ENCODE measurements at regions of chr5 and their contacts with region 1.

Region 1: GRCh38 chr5:119309326-119309725 is 46.5 kb upstream of the TNFAIP8 start:
- DNase-seq: no peak
- ATAC-seq: peak; percentile 20 to 55
- H3K4me3 Mint-ChIP-seq: peak overlapping the region; percentile 71 to 93 (median 84)
- H3K27ac Mint-ChIP-seq: peak overlapping the region; percentile 95 to 100 (median 98)
- H3K4me1 Mint-ChIP-seq: peaks cover 37 to 95% (median 89%) of the 10 kb centered on the region in 4 donors
- H3K27me3 Mint-ChIP-seq: no peaks in the 10 kb centered on the region

Region 2: GRCh38 chr5:119328753-119329602 is 19.7 kb after region 1 on chr5:
- POLR2A ChIA-PET with region 1: interaction called, 18 read pairs
- DNase-seq: peak in 8 of 10 donors; percentile 28 to 65 (median 45)
- ATAC-seq: peak; percentile 57 to 63
- H3K4me3 Mint-ChIP-seq: peak overlapping the region; percentile 53 to 87 (median 78)
- H3K27ac Mint-ChIP-seq: peak overlapping the region; percentile 89 to 99 (median 96)
- H3K4me1 Mint-ChIP-seq: peaks cover 54 to 95% (median 89%) of the 10 kb centered on the region in 4 donors
- H3K27me3 Mint-ChIP-seq: no peaks in the 10 kb centered on the region

Measured in naive thymus-derived CD8-positive, alpha-beta T cell (primary cell).